Activated T-helper 1 cell treated with anti-CD3 and anti-CD28 coated beads, Interleukin-12 subunit alpha, Interleukin-12 subunit beta, Interleukin-2, Interleukin-4 antibody, amounts not matched to agents 30 ng/mL and 10 ng/mL and 1 ng/mL, durations not matched to agents 14 hours and 24 hours and 36 hours (primary cell): ENCODE measurements at regions of chr6 and their contacts with region 1.

Region 1: DNA sequence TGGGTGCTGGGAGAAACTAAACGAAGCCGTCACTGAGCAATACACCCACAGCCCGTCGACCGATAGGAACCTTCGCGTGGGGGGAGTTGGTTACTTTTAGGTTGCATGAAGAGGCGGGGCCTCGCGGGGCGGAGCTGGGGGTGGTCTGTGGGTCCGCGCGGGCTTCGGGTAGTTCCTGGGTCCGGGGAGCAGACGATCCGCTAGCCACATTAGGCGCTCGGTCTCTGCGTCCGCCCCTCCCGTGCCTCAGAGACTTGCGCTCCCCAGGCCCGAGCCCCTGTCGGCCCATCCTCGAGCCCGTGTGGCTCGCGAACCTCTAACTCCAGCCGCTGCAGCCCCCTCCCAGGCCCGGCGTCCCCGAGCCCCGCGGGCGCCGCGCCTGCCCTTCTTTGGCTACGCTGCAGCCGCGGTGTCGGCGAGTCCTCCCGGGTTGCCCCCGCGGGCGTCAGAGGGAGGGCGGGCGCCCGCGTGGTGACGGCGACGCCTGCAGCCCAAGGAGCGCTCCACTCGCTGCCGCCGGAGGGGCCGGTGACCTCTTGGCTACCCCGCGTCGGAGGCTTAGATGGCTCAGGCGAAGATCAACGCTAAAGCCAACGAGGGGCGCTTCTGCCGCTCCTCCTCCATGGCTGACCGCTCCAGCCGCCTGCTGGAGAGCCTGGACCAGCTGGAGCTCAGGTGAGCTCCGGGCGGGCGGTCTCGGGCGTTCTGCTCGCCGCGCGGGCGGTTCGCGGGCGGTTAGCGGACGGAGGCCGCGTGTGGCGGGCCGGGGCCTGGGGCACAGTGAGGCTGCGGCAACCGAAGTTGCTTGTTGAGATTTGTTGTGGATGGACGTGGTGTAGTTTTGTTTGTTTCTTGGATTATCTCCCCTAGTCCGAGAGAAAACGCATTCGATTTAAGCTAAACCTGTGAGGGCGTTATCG is at the start of gene BAG2:
- DNase-seq: peak; percentile 88
- H3K4me3 Mint-ChIP-seq: peak within 1 kb of the TSS; percentile 93
- H3K27ac Mint-ChIP-seq: peak within 1 kb of the TSS; percentile 95
- H3K4me1 Mint-ChIP-seq: peaks cover 45% of the 10 kb centered on the region
- H3K27me3 Mint-ChIP-seq: no peaks in the 10 kb centered on the region
- total RNA-seq, gene BAG2: 12.3 and 13.1 TPM in 2 replicates

Region 2: GRCh38 chr6:56902641-56903464 is 269.5 kb before region 1 on chr6:
- intact Hi-C with region 1: loop called (anchors 1 kb)
- DNase-seq: no peak
- H3K4me3 Mint-ChIP-seq: no peak overlapping the region
- H3K27ac Mint-ChIP-seq: no peak overlapping the region
- H3K4me1 Mint-ChIP-seq: peaks cover 5% of the 10 kb centered on the region
- H3K27me3 Mint-ChIP-seq: peaks cover 15% of the 10 kb centered on the region

Region 3: DNA sequence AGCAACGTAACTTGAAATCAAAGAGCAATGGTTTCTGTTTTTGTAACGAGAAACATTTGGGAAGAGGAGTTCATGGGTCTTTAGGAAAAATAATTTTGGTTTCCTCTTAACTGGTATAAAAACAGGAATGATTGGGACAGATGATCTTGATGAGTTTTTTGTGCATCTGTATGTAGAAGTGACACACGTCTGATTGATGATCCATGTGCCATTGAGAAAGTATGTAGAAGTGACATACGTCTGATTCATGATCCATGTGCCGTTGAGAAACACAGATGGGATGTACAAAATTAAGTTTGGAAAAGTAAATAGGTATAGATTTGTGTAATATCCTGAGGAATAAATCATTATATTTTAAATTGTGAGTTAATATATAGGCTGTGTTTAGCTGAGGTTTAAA is 123.8 kb before region 1 on chr6:
- intact Hi-C with region 1: loop called (anchors 1 kb)
- DNase-seq: no peak
- H3K4me3 Mint-ChIP-seq: peak overlapping the region; percentile 84
- H3K27ac Mint-ChIP-seq: no peak overlapping the region
- H3K4me1 Mint-ChIP-seq: peaks cover 35% of the 10 kb centered on the region
- H3K27me3 Mint-ChIP-seq: peaks cover 23% of the 10 kb centered on the region

Region 4: DNA sequence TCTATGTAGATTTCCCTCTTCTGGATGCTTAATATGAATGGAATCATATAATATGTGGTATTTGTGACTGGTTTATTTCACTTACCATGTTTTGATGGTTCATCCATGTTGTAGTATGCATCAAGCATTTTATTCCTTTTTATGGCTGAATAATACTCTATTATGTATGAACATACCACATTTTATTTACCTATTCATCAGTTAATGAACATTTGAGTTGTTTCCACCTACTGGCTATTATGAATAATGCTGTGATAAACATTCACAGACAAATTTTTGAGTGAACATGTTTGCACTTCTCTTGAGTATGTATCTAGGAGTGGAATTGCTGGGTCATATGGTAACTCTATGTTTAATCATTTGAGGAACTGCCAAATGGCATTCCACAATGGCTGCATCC is 97.3 kb before region 1 on chr6:
- intact Hi-C with region 1: no loop called
- DNase-seq: no peak
- H3K4me3 Mint-ChIP-seq: no peak overlapping the region
- H3K27ac Mint-ChIP-seq: no peak overlapping the region
- H3K4me1 Mint-ChIP-seq: no peaks in the 10 kb centered on the region
- H3K27me3 Mint-ChIP-seq: no peaks in the 10 kb centered on the region

Region 5: DNA sequence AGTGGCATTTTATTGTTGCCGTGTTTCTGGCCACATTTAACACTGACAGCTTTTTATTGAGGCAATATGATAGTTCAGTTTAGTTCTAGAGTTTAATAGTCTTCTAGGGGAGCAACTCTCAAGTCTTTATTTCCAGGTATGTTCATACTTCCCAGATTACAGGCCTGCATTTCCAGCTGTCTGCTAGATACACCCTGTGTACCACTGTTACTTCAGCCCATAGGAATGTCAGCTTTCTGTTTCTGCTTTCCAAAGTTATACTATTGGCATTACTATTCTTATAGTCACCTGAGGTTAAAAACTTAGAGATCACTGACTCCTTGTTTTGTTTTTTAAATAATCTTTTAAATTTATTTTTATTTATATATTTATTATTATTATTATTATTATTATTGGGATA is 74.8 kb before region 1 on chr6:
- intact Hi-C with region 1: no loop called
- DNase-seq: no peak
- H3K4me3 Mint-ChIP-seq: no peak overlapping the region
- H3K27ac Mint-ChIP-seq: no peak overlapping the region
- H3K4me1 Mint-ChIP-seq: peaks cover 37% of the 10 kb centered on the region
- H3K27me3 Mint-ChIP-seq: no peaks in the 10 kb centered on the region

Region 6: GRCh38 chr6:57116776-57117175 is 55.6 kb before region 1 on chr6:
- intact Hi-C with region 1: no loop called
- DNase-seq: no peak
- H3K4me3 Mint-ChIP-seq: no peak overlapping the region
- H3K27ac Mint-ChIP-seq: no peak overlapping the region
- H3K4me1 Mint-ChIP-seq: peaks cover 7% of the 10 kb centered on the region
- H3K27me3 Mint-ChIP-seq: no peaks in the 10 kb centered on the region

Region 7: GRCh38 chr6:57135885-57136284 is 36.5 kb before region 1 on chr6:
- intact Hi-C with region 1: loop called (anchors 5 kb)
- DNase-seq: no peak
- H3K4me3 Mint-ChIP-seq: no peak overlapping the region
- H3K27ac Mint-ChIP-seq: no peak overlapping the region
- H3K4me1 Mint-ChIP-seq: peaks cover 20% of the 10 kb centered on the region
- H3K27me3 Mint-ChIP-seq: no peaks in the 10 kb centered on the region

Region 8: DNA sequence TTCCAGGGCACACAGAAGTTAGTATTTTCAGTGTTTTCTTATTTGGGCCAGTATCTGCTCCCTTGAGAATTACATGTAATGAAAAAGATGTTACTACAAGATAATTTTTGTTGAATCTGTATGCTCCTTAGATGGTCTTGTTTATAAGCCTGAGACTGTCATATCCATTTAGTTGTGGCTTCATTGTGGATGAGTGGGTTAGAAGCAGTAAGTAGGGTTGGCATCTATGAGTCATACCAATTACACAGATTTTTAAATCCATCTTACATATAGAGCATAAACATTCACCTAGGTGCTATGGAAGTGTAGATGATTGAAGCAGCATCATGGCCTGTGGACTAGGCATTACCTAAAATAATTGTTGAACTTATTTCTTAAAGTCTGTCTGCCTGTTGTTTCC is 13.7 kb before region 1 on chr6:
- intact Hi-C with region 1: loop called (anchors 1 kb)
- DNase-seq: no peak
- H3K4me3 Mint-ChIP-seq: no peak overlapping the region
- H3K27ac Mint-ChIP-seq: no peak overlapping the region
- H3K4me1 Mint-ChIP-seq: peaks cover 6% of the 10 kb centered on the region
- H3K27me3 Mint-ChIP-seq: no peaks in the 10 kb centered on the region

Region 9: DNA sequence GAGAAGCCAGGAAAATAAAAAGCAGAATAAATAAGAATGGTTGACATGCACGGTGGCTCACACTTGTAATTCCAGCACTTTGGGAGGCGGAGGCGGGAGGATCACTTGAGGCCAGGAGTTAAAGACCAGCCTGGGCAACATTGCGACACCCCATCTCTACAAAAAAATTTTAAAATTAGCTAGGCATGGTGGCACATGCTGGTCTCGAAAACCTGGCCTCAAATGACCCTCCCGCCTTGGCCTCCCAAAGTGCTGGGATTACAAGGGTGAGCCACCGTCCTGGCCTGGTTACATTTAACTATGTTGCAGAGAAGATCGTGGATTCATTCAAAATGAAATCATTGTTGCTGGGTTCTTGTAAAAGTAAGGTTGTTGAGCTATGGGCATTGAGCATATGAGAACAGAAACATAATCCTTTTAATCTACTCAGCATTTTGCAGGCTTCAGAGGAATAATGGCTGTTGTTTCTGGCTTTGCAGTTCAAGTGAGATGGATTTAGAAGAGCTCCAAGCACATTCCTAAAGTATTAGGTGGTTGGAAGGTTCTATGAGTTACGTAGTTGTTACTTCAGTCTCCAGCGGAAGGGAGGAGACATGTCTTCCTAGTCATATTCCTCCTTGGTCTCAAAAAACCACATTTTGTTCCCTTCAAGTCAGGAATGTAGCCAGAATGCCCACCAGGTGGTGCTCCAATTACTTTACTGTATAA is 95.3 kb after region 1 on chr6:
- intact Hi-C with region 1: loop called (anchors 2 kb)
- DNase-seq: no peak
- H3K4me3 Mint-ChIP-seq: no peak overlapping the region
- H3K27ac Mint-ChIP-seq: no peak overlapping the region
- H3K4me1 Mint-ChIP-seq: peaks cover 8% of the 10 kb centered on the region
- H3K27me3 Mint-ChIP-seq: peaks cover 2% of the 10 kb centered on the region